H1 (cell line): ENCODE measurements at regions of chr11 and their contacts with region 1.

Region 1: DNA sequence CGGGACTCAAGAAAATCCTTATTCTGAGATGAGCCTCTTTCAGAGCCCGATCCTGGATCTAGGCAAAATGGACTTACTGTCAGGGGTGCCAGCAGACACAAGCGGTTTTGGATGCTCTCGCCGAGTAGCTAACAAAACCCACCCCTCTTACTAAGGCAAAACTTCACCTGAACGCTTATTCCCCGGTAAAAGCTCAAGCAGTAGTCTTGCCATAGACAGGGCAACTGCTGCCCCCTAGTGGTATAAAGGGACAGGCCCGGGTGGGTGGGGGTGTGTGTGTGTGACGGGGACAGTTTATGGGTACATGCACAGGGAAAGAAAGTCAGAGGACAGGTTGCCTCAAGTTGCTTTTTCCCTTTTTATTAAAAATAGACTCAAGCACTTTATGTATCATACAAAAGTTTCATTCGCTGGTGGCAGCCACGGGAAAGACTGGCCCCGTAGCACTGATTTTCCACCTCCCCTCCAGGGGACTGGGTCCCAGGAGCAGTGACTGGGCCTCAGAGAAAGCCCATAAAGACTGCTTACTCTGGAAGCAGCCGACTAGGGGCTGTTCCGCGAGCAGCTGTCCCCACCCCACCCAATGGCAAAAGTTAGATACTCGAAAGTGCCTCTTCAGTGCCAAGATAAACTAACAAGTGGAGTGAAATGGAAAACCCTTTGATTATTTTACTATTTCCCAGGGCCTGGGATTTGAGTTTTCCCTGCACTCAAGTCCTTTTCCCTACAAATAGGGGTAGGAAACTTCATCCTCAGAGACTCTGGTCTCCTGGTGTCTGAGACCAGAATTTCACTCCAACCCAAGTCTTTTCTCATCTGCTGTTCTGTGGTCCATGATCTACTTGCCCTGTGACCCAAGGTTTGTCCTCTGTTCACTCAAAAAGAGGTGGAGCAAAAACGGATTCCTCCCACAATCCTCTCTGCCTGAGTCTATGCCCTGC is 4.7 kb downstream of the YPEL4 start:
- DNase-seq: peak in 1 of 2 experiments; percentile 93
- H3K4me3 ChIP-seq: no peak overlapping the region; a peak in 1 of 8 replicates
- H3K27ac ChIP-seq: no peak overlapping the region
- H3K4me1 ChIP-seq: peaks cover 34 to 65% (median 44%) of the 10 kb centered on the region in 4 experiments
- H3K27me3 ChIP-seq: no peaks in the 10 kb centered on the region
- CTCF ChIP-seq: peak; percentile 79 to 89 (median 85)
- EP300 ChIP-seq: no peak
- POLR2A ChIP-seq: peak; percentile 28 to 72
- RAD21 ChIP-seq: peak; percentile 81 to 92

Region 2: GRCh38 chr11:56750190-56750589 is 894.8 kb before region 1 on chr11:
- CTCF ChIA-PET with region 1: no interaction called
- POLR2A ChIA-PET with region 1: no interaction called
- DNase-seq: peak in 1 of 2 experiments; percentile 9
- H3K4me3 ChIP-seq: no peak overlapping the region
- H3K27ac ChIP-seq: no peak overlapping the region
- H3K4me1 ChIP-seq: peaks cover 0 to 3% (median 1%) of the 10 kb centered on the region in 4 experiments; a peak in 1 of 7 replicates
- H3K27me3 ChIP-seq: no peaks in the 10 kb centered on the region
- CTCF ChIP-seq: peak; percentile 35 to 63 (median 44)
- EP300 ChIP-seq: no peak
- POLR2A ChIP-seq: no peak
- RAD21 ChIP-seq: peak; percentile 28 to 54; a peak in 3 of 4 replicates

Region 3: GRCh38 chr11:57324886-57325734 is 319.9 kb before region 1 on chr11 and contains the start of gene TNKS1BP1:
- CTCF ChIA-PET with region 1: no interaction called
- POLR2A ChIA-PET with region 1: interaction called, 19 read pairs
- DNase-seq: peak; percentile 95
- H3K4me3 ChIP-seq: peak within 1 kb of the TSS; percentile 82 to 90 (median 88)
- H3K27ac ChIP-seq: peak within 1 kb of the TSS; percentile 96
- H3K4me1 ChIP-seq: peaks cover 0 to 24% (median 19%) of the 10 kb centered on the region in 4 experiments; a peak in 6 of 7 replicates
- H3K27me3 ChIP-seq: no peaks in the 10 kb centered on the region
- CTCF ChIP-seq: no peak
- EP300 ChIP-seq: no peak
- POLR2A ChIP-seq: peak; percentile 85 to 96
- RAD21 ChIP-seq: peak in 1 of 2 experiments; percentile 7; a peak in 1 of 4 replicates
- total RNA-seq, gene TNKS1BP1: 122 TPM in 2 replicates

Region 4: DNA sequence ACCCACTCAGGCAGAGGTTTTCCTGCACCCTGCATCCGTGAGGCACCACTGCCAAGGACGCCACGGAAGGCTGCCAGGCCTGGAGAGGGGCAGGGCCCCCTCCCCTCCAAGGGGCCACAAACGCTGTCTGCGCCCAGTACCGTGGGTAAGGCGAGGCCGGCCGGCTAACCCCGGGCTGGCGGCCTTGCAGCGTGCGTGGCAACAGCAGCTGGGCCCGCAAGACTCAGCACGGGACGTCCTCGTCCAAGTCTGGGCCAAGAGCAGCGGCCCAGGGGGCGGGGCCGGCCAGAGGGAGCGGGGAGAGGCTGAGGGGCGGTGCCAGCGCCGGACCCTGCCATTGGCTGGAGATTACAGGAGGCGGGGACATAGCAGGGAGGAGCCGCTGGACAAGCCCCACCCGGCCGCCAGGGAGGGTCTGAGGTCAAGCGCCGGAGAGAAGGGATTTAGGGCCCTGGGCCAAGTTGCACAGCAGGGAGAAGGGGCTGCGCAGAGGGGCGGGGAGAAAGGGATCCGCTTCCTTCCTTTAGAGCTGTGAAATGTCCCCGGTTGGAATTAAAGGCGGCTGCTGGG is 145.5 kb before region 1 on chr11:
- CTCF ChIA-PET with region 1: interaction called, 15 read pairs
- POLR2A ChIA-PET with region 1: interaction called, 26 read pairs
- DNase-seq: peak; percentile 89 to 98
- H3K4me3 ChIP-seq: peak overlapping the region; percentile 5 to 48 (median 36); a peak in 5 of 8 replicates
- H3K27ac ChIP-seq: no peak overlapping the region
- H3K4me1 ChIP-seq: peaks cover 7 to 18% (median 14%) of the 10 kb centered on the region in 4 experiments
- H3K27me3 ChIP-seq: no peaks in the 10 kb centered on the region
- CTCF ChIP-seq: no peak
- EP300 ChIP-seq: no peak
- POLR2A ChIP-seq: peak in 1 of 2 experiments; percentile 24; a peak in 2 of 3 replicates
- RAD21 ChIP-seq: peak; percentile 1 to 6; a peak in 2 of 4 replicates

Region 5: DNA sequence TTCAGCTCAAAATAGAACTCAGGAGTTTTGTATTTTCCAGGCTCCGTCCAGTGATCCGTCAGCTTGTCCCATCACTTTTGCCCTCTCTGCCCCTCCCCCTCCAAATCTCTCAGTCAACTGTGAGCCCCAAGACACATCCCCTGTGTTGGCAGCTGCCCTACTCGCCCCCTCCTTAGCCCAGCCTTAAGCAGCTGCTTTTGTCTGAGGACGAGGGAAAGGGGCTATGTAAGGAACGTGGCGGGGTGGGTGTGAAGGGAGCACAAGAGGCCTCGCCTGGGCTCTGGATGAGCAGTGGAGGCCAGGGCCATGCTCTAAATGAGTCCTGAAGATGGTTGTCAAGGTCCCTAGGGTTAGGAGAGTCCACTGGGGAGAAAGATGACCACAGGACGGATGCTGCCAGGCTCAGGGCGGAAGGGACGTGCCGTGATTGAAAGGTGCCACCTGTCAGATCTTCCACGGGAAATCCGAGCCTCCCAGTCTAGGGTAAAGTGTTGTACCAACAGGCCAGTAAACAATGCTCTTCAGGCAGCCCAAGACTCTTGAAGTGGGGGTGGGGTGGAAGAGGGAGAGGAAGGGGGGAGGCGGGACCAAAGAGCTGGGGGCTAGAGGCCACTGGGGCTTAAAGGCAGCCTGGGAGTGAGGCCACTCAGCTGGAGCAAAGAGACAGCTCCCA is 107.9 kb before region 1 on chr11 and contains the start of gene SMTNL1:
- CTCF ChIA-PET with region 1: interaction called, 7 read pairs
- POLR2A ChIA-PET with region 1: interaction called, 32 read pairs
- DNase-seq: no peak
- H3K4me3 ChIP-seq: no peak within 1 kb of the TSS
- H3K27ac ChIP-seq: peak within 1 kb of the TSS; percentile 31; the same call in 1 of the 2 replicates
- H3K4me1 ChIP-seq: peaks cover 3 to 12% (median 6%) of the 10 kb centered on the region in 4 experiments; a peak in 6 of 7 replicates
- H3K27me3 ChIP-seq: no peaks in the 10 kb centered on the region
- CTCF ChIP-seq: no peak
- EP300 ChIP-seq: no peak
- POLR2A ChIP-seq: no peak
- RAD21 ChIP-seq: no peak
- total RNA-seq, gene SMTNL1: not detected in 2 replicates

Region 6: GRCh38 chr11:57562596-57562995 is 82.4 kb before region 1 on chr11:
- CTCF ChIA-PET with region 1: interaction called, 357 read pairs
- POLR2A ChIA-PET with region 1: interaction called, 591 read pairs
- DNase-seq: no peak
- H3K4me3 ChIP-seq: no peak overlapping the region
- H3K27ac ChIP-seq: no peak overlapping the region
- H3K4me1 ChIP-seq: peaks cover 4 to 7% (median 4%) of the 10 kb centered on the region in 4 experiments; a peak in 6 of 7 replicates
- H3K27me3 ChIP-seq: no peaks in the 10 kb centered on the region
- CTCF ChIP-seq: peak in 2 of 3 experiments; percentile 54 to 57; a peak in 3 of 4 replicates
- EP300 ChIP-seq: no peak
- POLR2A ChIP-seq: no peak
- RAD21 ChIP-seq: peak; percentile 73 to 79

Region 7: DNA sequence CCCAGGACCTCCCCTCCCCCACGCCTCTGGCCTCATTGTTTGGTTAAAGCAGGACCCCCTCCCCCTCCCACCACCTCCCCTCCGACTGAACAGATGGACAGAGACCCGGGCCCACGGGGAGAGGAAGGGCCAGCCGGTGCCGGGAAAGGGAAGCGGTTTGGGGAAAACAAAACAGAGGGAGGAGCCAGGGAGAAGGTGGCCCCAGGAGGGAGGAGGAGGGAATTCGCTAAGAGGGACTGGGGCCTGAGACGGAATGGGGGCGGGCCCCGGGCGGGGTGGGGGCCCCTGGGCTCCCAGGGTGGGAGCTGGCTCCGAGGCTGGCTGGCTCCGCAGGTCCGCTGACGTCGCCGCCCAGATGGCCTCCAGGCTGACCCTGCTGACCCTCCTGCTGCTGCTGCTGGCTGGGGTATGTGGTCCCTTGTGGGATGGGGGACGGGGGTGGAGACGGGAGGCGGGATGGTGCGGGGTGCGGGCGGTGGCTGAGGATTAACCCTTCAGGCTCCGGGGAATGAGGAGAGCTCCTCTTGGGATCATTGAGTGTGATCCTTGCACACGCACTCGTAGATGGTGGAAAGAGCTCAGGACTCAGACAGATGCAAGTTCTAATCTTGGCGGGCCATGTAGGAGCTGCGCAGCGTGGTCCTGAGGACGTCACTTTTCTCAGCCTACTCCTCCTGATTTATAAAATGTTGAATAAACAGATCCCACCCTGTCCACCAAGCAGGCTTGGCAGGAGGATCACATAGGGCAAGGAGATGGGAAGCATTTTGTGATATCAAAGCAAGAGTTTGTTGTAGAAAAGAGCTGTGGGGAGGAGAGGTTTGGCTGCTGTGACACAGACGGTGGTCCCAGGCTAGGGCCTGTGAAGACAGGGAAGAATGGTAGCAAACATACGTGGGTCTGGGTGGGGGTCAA is 46.8 kb before region 1 on chr11:
- CTCF ChIA-PET with region 1: interaction called, 286 read pairs
- POLR2A ChIA-PET with region 1: interaction called, 1,546 read pairs
- DNase-seq: peak; percentile 75 to 87
- H3K4me3 ChIP-seq: peak overlapping the region; percentile 41 to 64 (median 54)
- H3K27ac ChIP-seq: peak overlapping the region; percentile 68; the same call in 1 of the 2 replicates
- H3K4me1 ChIP-seq: peaks cover 7 to 17% (median 11%) of the 10 kb centered on the region in 4 experiments
- H3K27me3 ChIP-seq: no peaks in the 10 kb centered on the region
- CTCF ChIP-seq: no peak
- EP300 ChIP-seq: peak in 1 of 2 experiments; percentile 86; a peak in 1 of 3 replicates
- POLR2A ChIP-seq: no peak; a peak in 1 of 3 replicates
- RAD21 ChIP-seq: peak in 1 of 2 experiments; percentile 12; a peak in 1 of 4 replicates

Region 8: DNA sequence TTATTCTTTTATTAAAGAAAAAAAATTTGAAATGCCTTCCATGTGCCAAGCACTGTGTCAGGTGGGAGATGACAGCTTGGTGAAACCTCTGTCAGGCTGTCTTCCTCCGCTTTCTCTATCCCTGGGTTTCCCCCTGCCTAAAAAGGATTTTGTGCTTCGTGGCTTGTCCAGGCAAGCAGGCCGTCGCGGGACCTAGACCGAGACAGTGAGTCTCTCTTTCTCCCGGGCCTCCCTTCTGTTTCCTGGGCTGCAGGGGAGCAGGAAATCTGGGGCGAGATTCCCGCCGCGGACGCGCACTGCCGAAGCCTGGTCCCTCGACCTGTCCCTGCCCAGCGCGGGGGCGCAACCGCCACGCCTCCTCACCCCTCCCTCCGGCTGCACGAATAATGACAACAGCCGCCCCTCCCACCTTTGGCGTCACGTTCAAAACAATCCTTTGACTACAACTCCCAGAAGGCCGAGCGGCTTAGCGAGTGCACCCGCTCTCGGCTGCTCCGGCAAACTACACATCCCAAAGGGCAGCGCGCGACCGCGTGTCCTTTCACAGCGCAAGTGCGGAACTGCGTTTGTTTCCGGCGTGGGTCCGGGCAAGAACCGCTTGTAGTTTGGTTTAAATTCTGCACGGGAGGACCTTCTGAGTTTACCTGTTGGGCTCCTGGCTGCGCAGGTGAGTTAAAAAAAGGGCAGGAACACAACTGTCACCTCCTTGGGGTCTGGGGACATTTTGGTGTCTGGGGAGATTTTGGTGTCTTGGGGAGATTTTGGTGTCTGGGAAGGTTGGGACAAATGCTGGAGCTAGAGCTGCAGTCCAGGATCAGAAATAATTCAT is 12.4 kb after region 1 on chr11 and contains the start of gene CLP1:
- CTCF ChIA-PET with region 1: interaction called, 20 read pairs
- POLR2A ChIA-PET with region 1: interaction called, 445 read pairs
- DNase-seq: peak; percentile 92 to 97
- H3K4me3 ChIP-seq: peak within 1 kb of the TSS; percentile 86 to 99 (median 92)
- H3K27ac ChIP-seq: no peak within 1 kb of the TSS
- H3K4me1 ChIP-seq: no peaks in the 10 kb centered on the region; a peak in 3 of 7 replicates
- H3K27me3 ChIP-seq: no peaks in the 10 kb centered on the region; a peak in 2 of 7 replicates
- CTCF ChIP-seq: no peak
- EP300 ChIP-seq: no peak
- POLR2A ChIP-seq: peak; percentile 17 to 73
- RAD21 ChIP-seq: 0 out of 4 replicates have a peak, but pooled peaks of 1 of the 2 experiments have one; percentile 3
- total RNA-seq, gene CLP1: 29.3 and 29.9 TPM in 2 replicates

Region 9: DNA sequence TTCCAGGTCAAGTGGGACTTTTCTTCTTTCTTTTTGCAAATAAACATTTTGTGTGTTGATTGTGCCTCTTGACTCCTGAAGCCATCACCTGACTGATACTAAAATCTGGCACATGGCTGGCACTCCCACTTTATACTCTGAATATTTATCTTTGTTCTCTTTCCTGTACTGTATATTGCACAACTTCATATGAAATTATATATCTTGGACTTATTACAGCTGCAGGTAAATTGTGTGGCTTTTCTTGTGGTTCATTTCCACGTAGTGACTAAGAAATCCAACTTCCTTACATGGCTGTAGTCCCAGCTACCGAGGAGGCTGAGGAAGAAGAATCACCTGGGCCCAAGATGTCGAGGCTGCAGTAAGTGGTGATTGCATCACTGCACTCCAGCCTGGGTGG is 820.7 kb after region 1 on chr11:
- CTCF ChIA-PET with region 1: no interaction called
- POLR2A ChIA-PET with region 1: no interaction called
- DNase-seq: no peak
- H3K4me3 ChIP-seq: no peak overlapping the region
- H3K27ac ChIP-seq: no peak overlapping the region
- H3K4me1 ChIP-seq: no peaks in the 10 kb centered on the region
- H3K27me3 ChIP-seq: no peaks in the 10 kb centered on the region
- CTCF ChIP-seq: no peak
- EP300 ChIP-seq: no peak
- POLR2A ChIP-seq: no peak
- RAD21 ChIP-seq: no peak